B cell (primary cell): ENCODE measurements at regions of chr20 and their contacts with region 1.

Region 1: DNA sequence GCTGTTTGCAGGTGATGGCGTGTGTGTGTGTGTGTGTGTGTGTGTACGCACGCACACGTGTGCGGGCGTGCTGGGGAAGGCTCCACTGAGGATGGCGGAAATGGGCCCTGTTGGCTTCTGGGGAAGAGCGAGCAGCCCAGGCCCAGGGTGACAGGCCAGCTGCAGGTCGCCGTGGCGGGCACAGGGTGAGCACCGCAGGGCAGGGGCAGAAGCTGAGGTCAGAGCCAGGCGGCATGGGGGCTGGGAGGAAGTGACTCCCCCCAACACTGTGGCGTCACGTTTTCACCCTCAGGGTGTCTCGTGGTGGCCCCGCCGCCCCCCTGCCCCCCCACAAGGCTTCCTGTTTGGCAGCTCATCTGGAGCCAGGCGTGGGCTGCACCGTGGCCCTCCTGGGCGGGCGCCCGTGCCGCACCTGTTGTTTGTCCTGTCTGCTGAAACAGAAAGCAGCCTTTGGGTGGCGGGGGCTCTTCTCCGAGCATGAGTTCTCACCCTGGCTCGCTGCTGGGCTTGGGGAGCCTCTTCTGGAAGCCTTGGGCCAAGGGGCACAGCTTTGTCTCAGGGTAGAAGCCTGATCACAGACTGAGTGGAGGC is 7.1 kb downstream of the RBM38 start:
- DNase-seq: peak; percentile 99
- ATAC-seq: peak; percentile 72
- H3K4me3 ChIP-seq: peak overlapping the region in 4 of 5 experiments; percentile 23 to 56 (median 46)
- H3K4me3 Mint-ChIP-seq: peak overlapping the region; percentile 92
- H3K27ac ChIP-seq: peak overlapping the region; percentile 96 to 97
- H3K27ac Mint-ChIP-seq: peak overlapping the region; percentile 100
- H3K4me1 ChIP-seq: peaks cover 97 to 99% of the 10 kb centered on the region in 2 donors
- H3K4me1 Mint-ChIP-seq: peaks cover 98% of the 10 kb centered on the region
- H3K27me3 ChIP-seq: no peaks in the 10 kb centered on the region
- H3K27me3 Mint-ChIP-seq: no peaks in the 10 kb centered on the region
- CTCF ChIP-seq: no peak

Region 2: GRCh38 chr20:57351042-57351783 is 47.1 kb before region 1 on chr20 and contains the start of gene RAE1:
- CTCF ChIA-PET with region 1: no interaction called
- POLR2A ChIA-PET with region 1: no interaction called
- intact Hi-C with region 1: loop called (anchors 2 kb)
- DNase-seq: peak; percentile 94
- ATAC-seq: peak; percentile 84
- H3K4me3 ChIP-seq: peak within 1 kb of the TSS; percentile 68 to 99 (median 89)
- H3K4me3 Mint-ChIP-seq: peak within 1 kb of the TSS; percentile 92
- H3K27ac ChIP-seq: peak within 1 kb of the TSS; percentile 58 to 81
- H3K27ac Mint-ChIP-seq: peak within 1 kb of the TSS; percentile 92
- H3K4me1 ChIP-seq: peaks cover 9 to 18% of the 10 kb centered on the region in 2 donors
- H3K4me1 Mint-ChIP-seq: peaks cover 22% of the 10 kb centered on the region
- H3K27me3 ChIP-seq: no peaks in the 10 kb centered on the region
- H3K27me3 Mint-ChIP-seq: no peaks in the 10 kb centered on the region
- CTCF ChIP-seq: no peak
- total RNA-seq, gene RAE1: 32.6 and 36.4 TPM in 2 replicates

Region 3: DNA sequence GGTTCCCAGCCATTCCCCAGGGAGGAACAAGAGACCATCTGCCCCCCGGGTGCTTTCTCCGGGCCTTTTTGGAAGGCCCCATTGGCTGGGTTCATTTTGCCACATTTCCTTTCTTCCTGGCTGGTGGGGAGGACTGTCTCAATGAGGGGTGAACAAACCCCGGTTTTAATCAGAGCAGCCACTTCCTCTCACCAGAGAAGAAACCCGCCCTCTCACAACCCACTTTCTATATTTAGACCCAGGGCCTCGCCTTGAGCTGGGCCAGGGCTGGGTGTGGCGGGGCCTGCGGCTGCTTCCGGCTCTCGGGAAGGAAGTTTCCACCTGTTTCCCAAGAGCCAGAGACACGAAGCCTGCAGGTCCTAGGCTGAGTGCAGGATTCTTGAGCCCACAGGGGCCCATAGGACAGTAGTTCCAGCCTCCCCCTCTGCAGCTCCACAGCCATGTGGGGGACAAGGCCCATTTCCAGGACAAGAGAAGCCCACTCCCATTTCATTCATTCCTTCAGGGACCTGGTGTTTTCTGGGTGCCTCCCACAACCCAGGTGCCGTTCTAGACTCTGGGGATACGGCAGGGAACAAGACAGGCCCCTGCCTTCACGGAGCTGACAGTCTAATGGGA is 34.7 kb after region 1 on chr20:
- CTCF ChIA-PET with region 1: interaction called, 46 read pairs
- POLR2A ChIA-PET with region 1: interaction called, 10 read pairs
- intact Hi-C with region 1: loop called (anchors 1 kb)
- DNase-seq: peak; percentile 83
- ATAC-seq: peak; percentile 72
- H3K4me3 ChIP-seq: peak overlapping the region in 4 of 5 experiments; percentile 7 to 25 (median 18)
- H3K4me3 Mint-ChIP-seq: peak overlapping the region; percentile 56
- H3K27ac ChIP-seq: peak overlapping the region; percentile 87 to 93
- H3K27ac Mint-ChIP-seq: peak overlapping the region; percentile 89
- H3K4me1 ChIP-seq: peaks cover 76 to 85% of the 10 kb centered on the region in 2 donors
- H3K4me1 Mint-ChIP-seq: peaks cover 81% of the 10 kb centered on the region
- H3K27me3 ChIP-seq: no peaks in the 10 kb centered on the region
- H3K27me3 Mint-ChIP-seq: no peaks in the 10 kb centered on the region
- CTCF ChIP-seq: no peak

Region 4: GRCh38 chr20:57480444-57481160 is 82.3 kb after region 1 on chr20:
- CTCF ChIA-PET with region 1: interaction called, 35 read pairs
- POLR2A ChIA-PET with region 1: interaction called, 50 read pairs
- intact Hi-C with region 1: loop called (anchors 1 kb)
- DNase-seq: peak; percentile 86
- ATAC-seq: peak; percentile 78
- H3K4me3 ChIP-seq: peak overlapping the region in 3 of 5 experiments; percentile 17 to 52 (median 25)
- H3K4me3 Mint-ChIP-seq: peak overlapping the region; percentile 83
- H3K27ac ChIP-seq: peak overlapping the region in 1 of 2 donors; percentile 66
- H3K27ac Mint-ChIP-seq: peak overlapping the region; percentile 92
- H3K4me1 ChIP-seq: peaks cover 63 to 76% of the 10 kb centered on the region in 2 donors
- H3K4me1 Mint-ChIP-seq: peaks cover 72% of the 10 kb centered on the region
- H3K27me3 ChIP-seq: no peaks in the 10 kb centered on the region
- H3K27me3 Mint-ChIP-seq: no peaks in the 10 kb centered on the region
- CTCF ChIP-seq: no peak

Region 5: DNA sequence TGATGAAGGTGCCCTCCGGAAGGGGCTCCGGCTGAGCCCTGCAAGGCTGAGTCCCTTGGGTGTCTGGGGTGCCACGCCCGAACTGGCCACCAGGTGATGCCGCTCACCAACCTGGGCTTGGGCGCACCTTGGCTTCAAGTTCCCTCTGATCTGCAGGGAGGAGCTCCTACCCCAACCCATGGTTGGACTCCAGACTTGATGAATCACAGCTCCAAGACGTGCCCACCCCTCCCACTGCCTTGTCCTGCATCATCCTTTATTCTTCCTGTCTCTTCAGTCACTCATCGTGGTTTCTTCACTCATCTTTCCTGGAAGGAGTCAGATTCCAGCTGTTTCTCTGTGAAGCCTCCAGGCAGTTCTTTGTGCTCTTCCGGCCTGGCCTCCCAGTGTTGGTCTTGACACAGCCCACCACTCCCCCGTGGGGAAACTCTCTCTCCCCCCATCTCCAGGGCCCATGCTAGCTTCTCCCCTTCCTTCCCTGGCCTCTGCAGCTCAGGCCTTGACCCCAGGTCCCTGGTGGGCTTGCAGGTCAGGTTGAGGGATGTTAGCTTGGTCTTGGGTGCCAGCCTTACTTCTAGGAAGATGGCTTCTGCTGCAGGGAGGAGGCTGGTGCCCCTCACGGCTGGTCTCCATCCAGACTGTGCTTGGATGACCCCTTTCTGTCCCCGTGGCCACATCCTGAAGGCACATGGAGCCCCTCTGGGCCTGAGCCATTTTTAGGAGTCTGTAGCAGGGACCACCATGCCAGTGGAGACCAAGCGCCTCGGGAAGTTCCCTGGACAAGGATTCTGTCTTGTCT is 224.5 kb after region 1 on chr20:
- CTCF ChIA-PET with region 1: interaction called, 10 read pairs
- POLR2A ChIA-PET with region 1: interaction called, 30 read pairs
- intact Hi-C with region 1: no loop called
- DNase-seq: peak; percentile 69
- ATAC-seq: no peak
- H3K4me3 ChIP-seq: no peak overlapping the region
- H3K4me3 Mint-ChIP-seq: peak overlapping the region; percentile 13
- H3K27ac ChIP-seq: no peak overlapping the region
- H3K27ac Mint-ChIP-seq: peak overlapping the region; percentile 80
- H3K4me1 ChIP-seq: peaks cover 54 to 59% of the 10 kb centered on the region in 2 donors
- H3K4me1 Mint-ChIP-seq: peaks cover 65% of the 10 kb centered on the region
- H3K27me3 ChIP-seq: no peaks in the 10 kb centered on the region
- H3K27me3 Mint-ChIP-seq: no peaks in the 10 kb centered on the region
- CTCF ChIP-seq: peak; percentile 82

Region 6: GRCh38 chr20:58131551-58132142 is 733.3 kb after region 1 on chr20:
- CTCF ChIA-PET with region 1: no interaction called
- POLR2A ChIA-PET with region 1: no interaction called
- intact Hi-C with region 1: no loop called
- DNase-seq: no peak
- ATAC-seq: no peak
- H3K4me3 ChIP-seq: no peak overlapping the region
- H3K4me3 Mint-ChIP-seq: no peak overlapping the region
- H3K27ac ChIP-seq: no peak overlapping the region
- H3K27ac Mint-ChIP-seq: no peak overlapping the region
- H3K4me1 ChIP-seq: no peaks in the 10 kb centered on the region
- H3K4me1 Mint-ChIP-seq: no peaks in the 10 kb centered on the region
- H3K27me3 ChIP-seq: peaks cover 0 to 27% (median 9%) of the 10 kb centered on the region in 4 experiments
- H3K27me3 Mint-ChIP-seq: peaks cover 75% of the 10 kb centered on the region
- CTCF ChIP-seq: no peak

Region 7: DNA sequence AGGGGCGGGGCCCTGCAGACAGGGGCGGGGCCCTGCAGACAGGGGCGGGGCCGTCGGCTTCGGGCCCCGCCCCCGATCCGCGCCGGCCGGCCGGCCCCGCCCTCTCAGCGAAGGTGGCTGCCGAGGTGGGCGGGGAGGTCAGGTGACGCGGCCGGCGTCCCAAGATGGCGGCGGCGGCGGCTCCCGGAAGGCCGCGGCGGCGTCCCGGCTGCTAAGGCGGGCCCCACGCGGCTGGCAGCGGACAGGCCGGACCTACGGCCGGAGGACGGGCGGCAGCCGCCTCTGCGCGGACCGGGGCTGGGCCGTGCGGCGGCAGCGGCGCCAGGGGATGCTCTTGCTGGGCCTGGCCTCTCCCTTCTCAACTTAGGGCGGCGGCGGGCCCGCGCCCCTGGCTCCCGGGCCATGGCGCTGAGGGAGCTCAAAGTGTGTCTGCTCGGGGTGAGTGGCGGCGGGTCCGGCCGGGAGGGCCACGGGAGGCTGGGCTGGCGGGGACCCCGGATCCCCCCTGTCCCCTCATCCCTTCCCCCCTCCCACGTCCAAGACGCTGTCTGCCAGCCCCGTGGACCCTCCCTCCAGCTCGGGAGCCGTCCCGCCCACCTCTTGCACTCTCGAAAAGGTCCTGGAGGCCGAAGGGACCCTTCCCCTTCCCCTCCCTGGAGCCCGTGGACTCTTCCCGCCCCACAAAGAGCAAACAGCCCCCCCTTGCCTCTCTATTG is 911.4 kb after region 1 on chr20 and contains the start of gene RAB22A:
- CTCF ChIA-PET with region 1: no interaction called
- POLR2A ChIA-PET with region 1: interaction called, 4 read pairs
- intact Hi-C with region 1: loop called (anchors 2 kb)
- DNase-seq: peak; percentile 91
- ATAC-seq: peak; percentile 58
- H3K4me3 ChIP-seq: peak within 1 kb of the TSS; percentile 68 to 89 (median 78)
- H3K4me3 Mint-ChIP-seq: peak within 1 kb of the TSS; percentile 91
- H3K27ac ChIP-seq: peak within 1 kb of the TSS; percentile 94 to 97
- H3K27ac Mint-ChIP-seq: peak within 1 kb of the TSS; percentile 96
- H3K4me1 ChIP-seq: peaks cover 47 to 54% of the 10 kb centered on the region in 2 donors
- H3K4me1 Mint-ChIP-seq: peaks cover 54% of the 10 kb centered on the region
- H3K27me3 ChIP-seq: no peaks in the 10 kb centered on the region
- H3K27me3 Mint-ChIP-seq: no peaks in the 10 kb centered on the region
- CTCF ChIP-seq: no peak
- total RNA-seq, gene RAB22A: 21.1 and 22.0 TPM in 2 replicates